Endothelial cell of umbilical vein (primary cell): ENCODE measurements at regions of chr9 and their contacts with region 1.

Region 1: GRCh38 chr9:22452415-22453010 is 5.9 kb downstream of the DMRTA1 start:
- DNase-seq: peak; percentile 63
- H3K4me3 ChIP-seq: no peak overlapping the region
- H3K27ac ChIP-seq: no peak overlapping the region
- H3K4me1 ChIP-seq: peaks cover 13% of the 10 kb centered on the region
- H3K27me3 ChIP-seq: no peaks in the 10 kb centered on the region
- CTCF ChIP-seq: peak; percentile 61 to 68
- POLR2A ChIP-seq: no peak

Region 2: DNA sequence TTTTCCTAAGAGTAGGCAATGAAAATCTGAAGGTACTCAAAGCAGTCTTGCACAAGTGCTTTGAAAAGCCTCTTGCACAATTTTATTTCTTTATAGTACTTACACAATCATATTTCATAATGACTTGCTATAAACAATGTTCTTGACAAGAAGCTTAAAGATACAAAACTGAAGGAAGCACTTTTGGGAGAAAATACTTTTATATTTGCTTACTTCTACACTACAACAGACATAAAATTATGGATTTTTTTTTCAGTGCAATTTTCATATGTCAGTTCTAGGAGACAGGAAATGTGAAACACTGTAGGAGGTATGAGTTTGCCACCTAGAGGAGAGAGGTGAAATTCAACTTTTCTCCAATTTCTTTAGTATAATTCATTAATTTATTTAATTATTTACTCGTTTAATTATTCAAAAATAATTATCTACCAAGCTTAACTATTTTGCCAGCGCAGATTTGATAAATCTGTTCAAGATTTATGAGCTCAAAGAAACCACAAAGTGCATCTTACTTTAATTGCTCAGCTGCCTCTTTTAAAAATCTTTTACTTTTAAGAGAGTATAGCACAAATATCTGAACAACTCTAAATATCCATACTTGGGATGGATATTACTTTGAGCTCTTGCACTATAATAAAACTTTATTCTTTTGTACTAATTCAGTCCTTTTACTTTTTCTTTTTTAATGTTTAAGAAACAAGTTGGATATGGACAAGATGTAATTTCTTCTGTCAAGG is 414.4 kb before region 1 on chr9:
- CTCF ChIA-PET with region 1: no interaction called
- POLR2A ChIA-PET with region 1: no interaction called
- dilution Hi-C with region 1: no loop called
- intact Hi-C with region 1: loop called (anchors 5 kb)
- DNase-seq: peak; percentile 51
- H3K4me3 ChIP-seq: no peak overlapping the region
- H3K27ac ChIP-seq: no peak overlapping the region
- H3K4me1 ChIP-seq: no peaks in the 10 kb centered on the region
- H3K27me3 ChIP-seq: no peaks in the 10 kb centered on the region
- CTCF ChIP-seq: peak; percentile 22 to 38
- POLR2A ChIP-seq: no peak

Region 3: DNA sequence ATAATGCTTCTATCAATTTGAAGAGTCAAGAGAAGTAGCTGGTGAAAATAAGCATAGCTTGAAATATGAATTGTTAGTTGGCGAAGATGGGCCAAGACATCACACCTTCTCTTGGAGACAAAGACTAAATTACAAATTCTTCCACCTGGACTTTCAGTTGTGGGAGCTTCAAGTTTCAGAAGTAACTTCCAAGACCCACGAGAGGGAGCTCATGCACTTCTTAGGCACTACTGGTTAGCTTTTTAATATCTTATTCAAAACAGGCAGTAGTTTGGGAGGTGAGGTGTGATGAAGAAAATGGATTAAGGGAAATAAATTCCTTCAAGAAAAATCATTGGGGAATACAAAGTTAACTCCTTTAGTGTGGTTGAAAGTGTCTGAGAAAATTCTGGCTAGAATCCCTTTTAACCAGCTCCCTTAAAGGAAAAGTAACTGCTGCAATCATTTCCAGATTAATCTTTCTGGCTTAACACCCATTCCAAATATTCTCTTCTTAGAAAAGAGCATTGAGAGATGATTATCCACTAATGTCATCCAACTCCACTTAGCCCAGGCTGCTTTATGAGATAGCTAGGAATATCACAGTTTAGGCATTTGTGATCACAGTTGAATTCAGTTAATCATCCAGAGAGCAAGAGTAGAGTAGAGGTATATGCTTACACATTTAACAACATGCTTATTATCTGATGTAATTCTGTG is 145.4 kb before region 1 on chr9:
- CTCF ChIA-PET with region 1: interaction called, 617 read pairs
- POLR2A ChIA-PET with region 1: no interaction called
- dilution Hi-C with region 1: no loop called
- intact Hi-C with region 1: loop called (anchors 1 kb)
- DNase-seq: peak; percentile 54
- H3K4me3 ChIP-seq: no peak overlapping the region
- H3K27ac ChIP-seq: no peak overlapping the region
- H3K4me1 ChIP-seq: no peaks in the 10 kb centered on the region
- H3K27me3 ChIP-seq: peaks cover 0 to 5% of the 10 kb centered on the region in 2 experiments
- CTCF ChIP-seq: peak; percentile 48 to 59
- POLR2A ChIP-seq: no peak

Region 4: DNA sequence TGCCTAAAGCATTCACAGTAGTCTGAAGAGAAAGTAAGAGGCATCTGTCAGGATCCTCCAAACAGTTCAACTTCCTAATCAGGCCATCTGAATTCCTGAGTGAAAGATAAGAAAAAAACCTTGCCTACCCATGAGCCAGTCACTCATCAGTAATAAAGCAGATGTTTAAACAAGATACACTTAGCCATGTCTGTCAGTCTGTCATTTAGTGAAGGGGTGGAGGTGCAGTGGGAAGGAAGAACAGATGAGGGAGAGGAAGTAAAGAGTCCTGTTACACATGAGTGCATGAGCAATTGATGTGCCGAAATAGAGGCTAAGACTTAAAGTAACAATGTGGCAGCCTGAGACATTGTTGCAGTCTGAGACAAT is 35.8 kb before region 1 on chr9:
- CTCF ChIA-PET with region 1: interaction called, 26 read pairs
- POLR2A ChIA-PET with region 1: no interaction called
- dilution Hi-C with region 1: no loop called
- intact Hi-C with region 1: no loop called
- DNase-seq: peak; percentile 75
- H3K4me3 ChIP-seq: peak overlapping the region in 1 of 3 experiments; percentile 33
- H3K27ac ChIP-seq: peak overlapping the region; percentile 80
- H3K4me1 ChIP-seq: peaks cover 29% of the 10 kb centered on the region
- H3K27me3 ChIP-seq: no peaks in the 10 kb centered on the region
- CTCF ChIP-seq: no peak
- POLR2A ChIP-seq: no peak

Region 5: GRCh38 chr9:22469928-22470544 is 17.5 kb after region 1 on chr9:
- CTCF ChIA-PET with region 1: interaction called, 25 read pairs
- POLR2A ChIA-PET with region 1: no interaction called
- dilution Hi-C with region 1: no loop called
- intact Hi-C with region 1: no loop called
- DNase-seq: peak; percentile 58
- H3K4me3 ChIP-seq: no peak overlapping the region
- H3K27ac ChIP-seq: no peak overlapping the region
- H3K4me1 ChIP-seq: no peaks in the 10 kb centered on the region
- H3K27me3 ChIP-seq: peaks cover 0 to 10% of the 10 kb centered on the region in 2 experiments
- CTCF ChIP-seq: peak; percentile 65 to 69
- POLR2A ChIP-seq: no peak

Region 6: GRCh38 chr9:22922222-22922621 is 469.7 kb after region 1 on chr9:
- CTCF ChIA-PET with region 1: no interaction called
- POLR2A ChIA-PET with region 1: no interaction called
- dilution Hi-C with region 1: no loop called
- intact Hi-C with region 1: no loop called
- DNase-seq: no peak
- H3K4me3 ChIP-seq: no peak overlapping the region
- H3K27ac ChIP-seq: no peak overlapping the region
- H3K4me1 ChIP-seq: no peaks in the 10 kb centered on the region
- H3K27me3 ChIP-seq: no peaks in the 10 kb centered on the region
- CTCF ChIP-seq: no peak
- POLR2A ChIP-seq: no peak